ENCODE measurements at regions of chr3 and their contacts with region 1.

Region 1: DNA sequence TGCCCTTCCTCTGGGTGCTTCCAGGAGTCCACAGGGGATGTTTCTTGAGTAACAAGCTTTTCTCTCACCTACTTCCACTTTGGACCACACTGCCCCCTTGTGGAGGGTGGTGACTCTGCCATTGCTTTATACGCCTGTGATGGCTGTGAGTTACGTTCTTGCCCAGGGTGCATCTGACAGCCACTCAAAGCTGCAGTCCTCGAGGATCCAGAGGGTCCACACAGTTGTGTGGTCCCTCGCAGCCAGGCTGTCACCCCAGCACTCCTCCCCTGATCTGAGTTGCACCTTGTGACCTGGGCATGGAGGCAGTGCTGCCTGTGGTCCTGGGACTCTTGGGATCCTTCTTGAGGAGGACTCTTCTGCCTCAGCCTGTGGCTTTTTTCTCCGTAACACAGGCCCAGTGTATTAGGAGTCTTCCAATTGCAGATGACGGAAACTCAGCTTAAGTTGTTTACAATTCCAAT is 23.4 kb downstream of the FOXL2 start:
- DNase-seq: peak; percentile 53 to 84
- ATAC-seq: peak; percentile 90 to 93
- H3K4me3 ChIP-seq: no peak overlapping the region
- H3K27ac ChIP-seq: no peak overlapping the region
- H3K4me1 ChIP-seq: peaks cover 15% of the 10 kb centered on the region
- CTCF ChIP-seq: peak; percentile 72
- EP300 ChIP-seq: no peak
- POLR2A ChIP-seq: no peak
- RAD21 ChIP-seq: peak; percentile 73 to 81

Region 2: GRCh38 chr3:138417559-138417982 is 506.0 kb before region 1 on chr3:
- CTCF ChIA-PET with region 1: interaction called, 65 read pairs
- POLR2A ChIA-PET with region 1: interaction called, 4 read pairs
- DNase-seq: peak; percentile 70 to 79
- ATAC-seq: peak; percentile 97 to 99
- H3K4me3 ChIP-seq: no peak overlapping the region
- H3K27ac ChIP-seq: no peak overlapping the region
- H3K4me1 ChIP-seq: no peaks in the 10 kb centered on the region
- CTCF ChIP-seq: peak; percentile 73
- EP300 ChIP-seq: no peak
- POLR2A ChIP-seq: no peak
- RAD21 ChIP-seq: peak; percentile 77 to 80

Region 3: GRCh38 chr3:138479438-138479863 is 444.1 kb before region 1 on chr3:
- CTCF ChIA-PET with region 1: interaction called, 21 read pairs
- POLR2A ChIA-PET with region 1: no interaction called
- DNase-seq: peak; percentile 44 to 45
- ATAC-seq: peak; percentile 64 to 81; a peak in 5 of 6 replicates
- H3K4me3 ChIP-seq: no peak overlapping the region
- H3K27ac ChIP-seq: no peak overlapping the region
- H3K4me1 ChIP-seq: no peaks in the 10 kb centered on the region
- CTCF ChIP-seq: peak; percentile 73
- EP300 ChIP-seq: no peak
- POLR2A ChIP-seq: no peak
- RAD21 ChIP-seq: peak; percentile 76

Region 4: GRCh38 chr3:138687236-138687635 is 236.3 kb before region 1 on chr3:
- CTCF ChIA-PET with region 1: interaction called, 143 read pairs
- POLR2A ChIA-PET with region 1: no interaction called
- DNase-seq: no peak
- ATAC-seq: no peak
- H3K4me3 ChIP-seq: no peak overlapping the region
- H3K27ac ChIP-seq: peak overlapping the region; percentile 19 to 51; a peak in 2 of 6 replicates
- H3K4me1 ChIP-seq: peaks cover 30% of the 10 kb centered on the region
- CTCF ChIP-seq: no peak
- EP300 ChIP-seq: no peak
- POLR2A ChIP-seq: no peak
- RAD21 ChIP-seq: no peak

Region 5: GRCh38 chr3:138935848-138936740 is 12.5 kb after region 1 on chr3:
- CTCF ChIA-PET with region 1: interaction called, 82 read pairs
- POLR2A ChIA-PET with region 1: interaction called, 3 read pairs
- DNase-seq: peak; percentile 64 to 75
- ATAC-seq: peak; percentile 91
- H3K4me3 ChIP-seq: peak overlapping the region; percentile 45
- H3K27ac ChIP-seq: peak overlapping the region; percentile 69 to 93
- H3K4me1 ChIP-seq: no peaks in the 10 kb centered on the region
- CTCF ChIP-seq: peak; percentile 62
- EP300 ChIP-seq: no peak
- POLR2A ChIP-seq: peak; percentile 15; the same call in 1 of the 2 replicates
- RAD21 ChIP-seq: peak; percentile 45 to 47; a peak in 4 of 5 replicates

Region 6: GRCh38 chr3:139074565-139075115 is 151.1 kb after region 1 on chr3:
- CTCF ChIA-PET with region 1: no interaction called
- POLR2A ChIA-PET with region 1: no interaction called
- DNase-seq: no peak
- ATAC-seq: no peak
- H3K4me3 ChIP-seq: no peak overlapping the region
- H3K27ac ChIP-seq: no peak overlapping the region
- H3K4me1 ChIP-seq: no peaks in the 10 kb centered on the region
- CTCF ChIP-seq: no peak
- EP300 ChIP-seq: no peak
- POLR2A ChIP-seq: no peak
- RAD21 ChIP-seq: no peak

Region 7: DNA sequence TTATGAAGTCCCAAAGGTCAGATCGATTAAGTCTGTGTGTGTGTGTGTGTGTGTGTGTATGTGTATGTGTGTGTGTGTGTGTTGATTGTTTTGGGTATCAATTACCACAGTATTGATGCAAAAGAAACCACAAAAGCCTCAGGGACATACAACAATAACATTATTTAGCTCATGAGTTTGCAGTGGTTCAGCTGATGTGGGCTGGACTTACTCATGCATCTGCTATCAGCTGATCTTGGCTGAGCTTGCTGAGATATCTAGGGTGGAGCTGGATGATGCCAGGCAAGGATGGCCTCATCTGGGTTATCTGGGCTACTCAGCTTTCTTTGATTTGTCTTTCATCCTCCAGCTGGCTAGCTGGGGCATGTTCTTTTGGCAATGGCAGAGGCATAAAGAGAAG is 203.5 kb after region 1 on chr3:
- CTCF ChIA-PET with region 1: no interaction called
- POLR2A ChIA-PET with region 1: no interaction called
- DNase-seq: no peak
- ATAC-seq: 0 out of 6 replicates have a peak, but pooled peaks of 1 of the 2 experiments have one; percentile 34
- H3K4me3 ChIP-seq: no peak overlapping the region
- H3K27ac ChIP-seq: no peak overlapping the region
- H3K4me1 ChIP-seq: 0 out of 3 replicates have a peak, but pooled peaks cover under 1% of the 10 kb centered on the region
- CTCF ChIP-seq: no peak
- EP300 ChIP-seq: no peak
- POLR2A ChIP-seq: no peak
- RAD21 ChIP-seq: no peak

Region 8: GRCh38 chr3:139374099-139374498 is 450.5 kb after region 1 on chr3:
- CTCF ChIA-PET with region 1: no interaction called
- POLR2A ChIA-PET with region 1: no interaction called
- DNase-seq: no peak
- ATAC-seq: no peak
- H3K4me3 ChIP-seq: no peak overlapping the region
- H3K27ac ChIP-seq: no peak overlapping the region
- H3K4me1 ChIP-seq: no peaks in the 10 kb centered on the region
- CTCF ChIP-seq: no peak
- EP300 ChIP-seq: no peak
- POLR2A ChIP-seq: no peak
- RAD21 ChIP-seq: no peak